Psoas muscle (tissue), 8 donors: ENCODE measurements at regions of chr1 and their contacts with region 1.

Region 1: DNA sequence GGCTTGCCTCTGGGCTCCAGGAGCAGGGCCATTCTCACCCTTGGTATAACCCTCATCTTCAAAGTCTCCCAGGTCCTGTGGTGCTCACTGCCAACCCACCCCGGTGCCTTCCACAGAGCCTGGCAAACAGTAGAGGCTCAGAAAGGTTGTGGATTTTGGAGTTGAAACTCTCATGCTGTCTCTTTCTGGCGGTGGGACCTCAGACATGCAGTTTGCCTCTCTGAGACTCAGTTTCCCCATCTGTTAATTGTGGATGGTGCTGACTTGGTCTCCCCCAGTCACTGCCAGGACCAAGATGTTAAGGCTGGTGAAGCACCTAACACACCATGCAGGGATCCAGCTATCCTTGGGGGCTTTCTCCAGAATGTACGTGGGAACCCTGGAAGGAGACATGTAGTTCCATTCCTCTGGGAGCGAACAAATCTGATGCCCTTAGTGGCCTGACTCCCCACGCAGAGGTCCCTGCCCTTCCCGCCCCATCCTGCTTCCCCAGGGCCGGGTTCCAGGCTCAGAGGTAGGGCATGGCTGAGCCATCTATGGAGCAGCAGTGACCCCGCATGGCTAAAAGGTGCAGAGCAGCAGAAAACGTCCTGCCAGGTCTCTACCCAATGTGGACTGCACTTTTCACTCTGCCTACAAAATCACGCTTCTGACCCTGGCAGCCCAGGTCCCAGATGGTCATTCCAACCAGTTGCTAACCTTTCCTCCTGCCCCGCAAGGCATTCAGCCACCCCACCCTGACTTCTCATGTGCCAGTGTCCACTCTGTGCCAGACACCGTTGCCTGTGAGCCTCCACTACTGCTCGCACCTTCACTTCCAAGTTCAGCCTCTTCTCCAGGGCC is 9.2 kb upstream of the TTC22 start:
- DNase-seq: peak; percentile 44 to 71
- ATAC-seq: peak; percentile 85 to 95 (median 88)
- H3K4me3 ChIP-seq: no peak overlapping the region
- H3K27ac ChIP-seq: no peak overlapping the region
- H3K4me1 ChIP-seq: no peaks in the 10 kb centered on the region
- H3K27me3 ChIP-seq: no peaks in the 10 kb centered on the region
- CTCF ChIP-seq: peak; percentile 80

Region 2: GRCh38 chr1:54070171-54070837 is 740.0 kb before region 1 on chr1:
- intact Hi-C with region 1: loop called in 1 of 2 experiments (anchors 5 kb)
- DNase-seq: no peak
- ATAC-seq: peak in 2 of 4 donors; percentile 66 to 82
- H3K4me3 ChIP-seq: no peak overlapping the region
- H3K27ac ChIP-seq: no peak overlapping the region
- H3K4me1 ChIP-seq: no peaks in the 10 kb centered on the region
- H3K27me3 ChIP-seq: no peaks in the 10 kb centered on the region
- CTCF ChIP-seq: peak; percentile 76

Region 3: DNA sequence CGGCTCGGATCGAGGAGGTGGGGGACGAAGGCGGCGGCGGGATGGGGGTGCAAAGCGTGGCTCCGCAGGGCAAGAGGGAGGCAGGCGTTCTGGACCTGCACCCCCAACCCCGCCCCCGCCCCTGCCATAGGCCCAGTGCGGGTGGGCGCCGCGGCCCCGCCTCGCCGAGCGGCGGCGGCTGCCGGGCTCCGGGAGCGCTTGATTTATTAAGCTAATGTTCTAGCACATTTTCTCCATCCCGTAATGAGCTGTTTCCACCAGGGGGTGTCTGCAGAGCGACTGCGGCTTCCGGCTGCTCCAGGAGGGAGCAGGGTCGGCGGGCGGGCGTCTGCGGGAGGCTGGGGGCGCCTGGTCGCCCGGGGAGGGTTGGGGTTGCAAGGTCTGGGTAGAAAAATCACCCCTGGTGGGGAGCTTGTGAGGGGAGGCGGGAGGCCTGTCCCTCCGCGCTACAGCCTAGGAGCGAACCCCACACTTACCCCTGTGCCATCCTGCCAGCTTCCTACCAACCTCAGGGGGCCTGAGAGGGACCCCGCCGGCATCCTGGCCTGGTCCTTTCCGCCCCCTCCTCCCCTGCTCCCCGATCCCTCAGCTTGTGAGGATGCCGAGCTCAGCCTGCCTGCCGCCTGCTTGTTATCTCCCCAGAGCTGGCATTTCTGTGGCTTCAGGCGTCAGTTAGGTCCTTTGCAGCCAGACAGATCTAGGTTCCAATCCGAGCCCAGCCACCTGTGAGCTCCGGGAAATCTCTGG is 310.8 kb before region 1 on chr1:
- intact Hi-C with region 1: loop called in 1 of 2 experiments (anchors 10 kb)
- DNase-seq: no peak
- ATAC-seq: peak; percentile 36 to 73 (median 70)
- H3K4me3 ChIP-seq: peak overlapping the region; percentile 60
- H3K27ac ChIP-seq: no peak overlapping the region
- H3K4me1 ChIP-seq: no peaks in the 10 kb centered on the region
- H3K27me3 ChIP-seq: peaks cover 0 to 14% (median 0%) of the 10 kb centered on the region in 3 donors
- CTCF ChIP-seq: no peak

Region 4: GRCh38 chr1:54671985-54672608 is 138.2 kb before region 1 on chr1:
- intact Hi-C with region 1: loop called in 1 of 2 experiments (anchors 5 kb)
- DNase-seq: no peak
- ATAC-seq: peak in 2 of 4 donors; percentile 26 to 54
- H3K4me3 ChIP-seq: no peak overlapping the region
- H3K27ac ChIP-seq: no peak overlapping the region
- H3K4me1 ChIP-seq: no peaks in the 10 kb centered on the region
- H3K27me3 ChIP-seq: no peaks in the 10 kb centered on the region
- CTCF ChIP-seq: peak; percentile 47